Sigmoid colon (tissue), 7 donors: ENCODE measurements at regions of chr10 and their contacts with region 1.

Region 1: DNA sequence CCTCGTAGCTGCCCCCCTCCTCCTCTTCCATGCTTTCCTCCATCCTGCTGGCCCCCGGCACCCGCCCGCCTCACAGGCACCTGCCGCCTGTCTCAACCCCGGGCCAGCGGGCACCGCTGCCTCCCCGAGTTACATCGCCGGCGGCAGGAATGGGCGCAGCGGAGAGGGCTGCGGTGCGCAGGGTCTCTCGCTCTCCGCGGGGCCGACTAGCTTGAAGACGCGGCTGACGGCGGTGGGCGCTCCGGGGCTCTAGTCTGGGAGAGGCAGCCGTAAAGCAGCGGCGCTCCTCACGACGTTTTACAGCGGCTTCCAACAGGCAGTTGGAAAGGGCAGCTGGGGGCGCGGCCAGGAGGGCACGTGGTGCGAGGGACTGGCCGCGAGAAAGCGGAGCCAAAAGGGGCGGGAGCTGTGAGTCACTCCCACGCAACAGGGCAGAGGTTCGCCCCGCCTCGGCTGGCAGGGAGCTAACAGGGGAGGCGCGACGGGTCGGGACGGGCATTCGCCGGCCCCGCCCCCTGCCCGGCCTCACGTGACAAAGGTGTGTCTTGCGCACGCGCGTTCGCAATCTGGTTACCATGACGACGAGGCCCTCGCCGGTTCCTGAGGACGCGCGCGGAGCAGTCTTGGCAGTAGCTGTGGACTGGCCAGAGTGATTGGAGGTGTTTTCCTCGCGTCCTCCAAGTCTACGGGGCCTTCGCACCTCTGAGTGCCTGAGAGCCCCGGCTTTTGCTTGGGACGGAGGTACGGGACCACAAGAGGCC is at the start of gene CACUL1:
- DNase-seq: peak; percentile 100
- H3K4me3 ChIP-seq: peak within 1 kb of the TSS; percentile 91 to 99 (median 98)
- H3K27ac ChIP-seq: peak within 1 kb of the TSS; percentile 83 to 98 (median 94)
- H3K4me1 ChIP-seq: peaks cover 0 to 44% (median 26%) of the 10 kb centered on the region in 4 donors
- H3K27me3 ChIP-seq: no peaks in the 10 kb centered on the region
- CTCF ChIP-seq: no peak
- EP300 ChIP-seq: peak in 1 of 4 donors; percentile 75
- POLR2A ChIP-seq: peak; percentile 71 to 82
- total RNA-seq, gene CACUL1: 41.0 to 51.7 (median 50.4) TPM

Region 2: GRCh38 chr10:118800920-118801319 is 46.0 kb after region 1 on chr10:
- intact Hi-C with region 1: loop called (anchors 5 kb)
- DNase-seq: no peak
- H3K4me3 ChIP-seq: no peak overlapping the region
- H3K27ac ChIP-seq: no peak overlapping the region
- H3K4me1 ChIP-seq: peaks cover 0 to 23% (median 11%) of the 10 kb centered on the region in 4 donors
- H3K27me3 ChIP-seq: no peaks in the 10 kb centered on the region
- CTCF ChIP-seq: peak; percentile 26 to 59 (median 39)
- EP300 ChIP-seq: no peak
- POLR2A ChIP-seq: no peak

Region 3: DNA sequence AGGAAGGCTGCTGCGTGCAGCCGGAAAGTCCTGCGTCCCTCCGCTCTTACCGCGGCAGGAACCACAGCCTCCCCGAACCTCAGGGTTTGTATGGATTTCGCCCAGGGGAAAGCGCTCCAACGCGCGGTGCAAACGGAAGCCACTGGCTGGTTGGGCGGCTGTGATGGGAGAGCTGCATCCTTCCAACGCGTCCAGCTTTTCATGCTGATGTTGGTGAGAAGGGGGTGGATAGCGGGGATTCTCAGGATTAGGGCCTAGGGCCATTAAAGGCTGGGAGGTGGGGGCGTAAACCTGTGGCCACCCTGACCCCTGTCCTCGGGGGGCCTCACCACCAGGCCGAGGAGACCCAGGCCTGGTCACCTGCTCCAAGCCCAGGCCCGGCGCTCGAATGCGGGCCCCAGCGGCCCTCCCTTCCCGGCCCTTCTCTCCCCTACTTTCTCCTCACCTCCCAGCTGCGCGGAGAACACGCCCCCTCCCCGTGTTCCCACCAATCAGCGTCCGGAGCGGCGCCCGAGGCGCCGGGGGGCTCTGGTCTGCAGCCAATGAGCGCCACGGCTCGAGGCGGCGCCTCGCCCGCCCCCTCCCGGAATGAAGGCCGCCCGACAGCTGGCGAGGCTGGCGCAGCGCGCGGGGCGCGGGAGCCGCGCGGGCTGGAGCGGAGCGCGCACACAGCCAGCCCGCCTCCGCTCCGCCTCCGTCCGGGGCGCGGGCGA is 274.2 kb after region 1 on chr10:
- intact Hi-C with region 1: loop called (anchors 5 kb)
- DNase-seq: peak; percentile 95
- H3K4me3 ChIP-seq: peak overlapping the region; percentile 21 to 77 (median 69)
- H3K27ac ChIP-seq: peak overlapping the region; percentile 76 to 89 (median 82)
- H3K4me1 ChIP-seq: peaks cover 0 to 54% (median 50%) of the 10 kb centered on the region in 4 donors
- H3K27me3 ChIP-seq: no peaks in the 10 kb centered on the region
- CTCF ChIP-seq: no peak
- EP300 ChIP-seq: no peak
- POLR2A ChIP-seq: no peak

Region 4: DNA sequence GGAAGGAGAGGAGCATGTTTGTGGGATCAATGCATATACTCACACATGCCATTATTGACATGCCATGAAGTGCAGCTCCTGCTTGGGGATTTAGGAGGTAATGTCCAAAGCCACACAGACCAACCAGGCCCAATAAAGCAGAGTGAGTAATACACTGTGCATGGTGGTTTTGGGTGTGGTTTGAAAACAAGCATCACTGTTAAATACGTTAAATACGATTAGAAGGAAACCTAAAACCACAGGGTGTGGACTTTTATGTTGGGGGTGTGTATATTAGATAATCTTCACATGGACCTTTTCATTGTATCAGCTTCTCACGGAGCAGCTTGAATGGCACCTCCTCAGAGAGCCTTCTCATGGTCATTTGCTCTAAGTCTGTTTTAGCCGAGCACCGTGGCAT is 336.1 kb after region 1 on chr10:
- intact Hi-C with region 1: no loop called
- DNase-seq: no peak
- H3K4me3 ChIP-seq: no peak overlapping the region
- H3K27ac ChIP-seq: no peak overlapping the region
- H3K4me1 ChIP-seq: peaks cover 0 to 8% (median 0%) of the 10 kb centered on the region in 4 donors
- H3K27me3 ChIP-seq: no peaks in the 10 kb centered on the region
- CTCF ChIP-seq: no peak
- EP300 ChIP-seq: no peak
- POLR2A ChIP-seq: no peak